Natural killer cell (primary cell): ENCODE measurements at regions of chr5 and their contacts with region 1.

Region 1: GRCh38 chr5:115841382-115842088 is at the starts of genes AP3S1 and ATG12:
- DNase-seq: peak; percentile 93 to 95
- ATAC-seq: peak; percentile 84 to 95 (median 87)
- H3K4me3 ChIP-seq: peak within 1 kb of the TSS; percentile 89
- H3K4me3 Mint-ChIP-seq: peak within 1 kb of the TSS; percentile 96
- H3K27ac ChIP-seq: peak within 1 kb of the TSS; percentile 92
- H3K27ac Mint-ChIP-seq: peak within 1 kb of the TSS; percentile 97 to 98
- H3K4me1 ChIP-seq: peaks cover 15% of the 10 kb centered on the region
- H3K4me1 Mint-ChIP-seq: peaks cover 41 to 56% of the 10 kb centered on the region in 2 donors
- H3K27me3 ChIP-seq: no peaks in the 10 kb centered on the region
- H3K27me3 Mint-ChIP-seq: no peaks in the 10 kb centered on the region
- CTCF ChIP-seq: no peak
- total RNA-seq, gene AP3S1: 35.5 to 57.9 (median 37.1) TPM
- total RNA-seq, gene ATG12: 88.9 to 108 (median 92.9) TPM

Region 2: DNA sequence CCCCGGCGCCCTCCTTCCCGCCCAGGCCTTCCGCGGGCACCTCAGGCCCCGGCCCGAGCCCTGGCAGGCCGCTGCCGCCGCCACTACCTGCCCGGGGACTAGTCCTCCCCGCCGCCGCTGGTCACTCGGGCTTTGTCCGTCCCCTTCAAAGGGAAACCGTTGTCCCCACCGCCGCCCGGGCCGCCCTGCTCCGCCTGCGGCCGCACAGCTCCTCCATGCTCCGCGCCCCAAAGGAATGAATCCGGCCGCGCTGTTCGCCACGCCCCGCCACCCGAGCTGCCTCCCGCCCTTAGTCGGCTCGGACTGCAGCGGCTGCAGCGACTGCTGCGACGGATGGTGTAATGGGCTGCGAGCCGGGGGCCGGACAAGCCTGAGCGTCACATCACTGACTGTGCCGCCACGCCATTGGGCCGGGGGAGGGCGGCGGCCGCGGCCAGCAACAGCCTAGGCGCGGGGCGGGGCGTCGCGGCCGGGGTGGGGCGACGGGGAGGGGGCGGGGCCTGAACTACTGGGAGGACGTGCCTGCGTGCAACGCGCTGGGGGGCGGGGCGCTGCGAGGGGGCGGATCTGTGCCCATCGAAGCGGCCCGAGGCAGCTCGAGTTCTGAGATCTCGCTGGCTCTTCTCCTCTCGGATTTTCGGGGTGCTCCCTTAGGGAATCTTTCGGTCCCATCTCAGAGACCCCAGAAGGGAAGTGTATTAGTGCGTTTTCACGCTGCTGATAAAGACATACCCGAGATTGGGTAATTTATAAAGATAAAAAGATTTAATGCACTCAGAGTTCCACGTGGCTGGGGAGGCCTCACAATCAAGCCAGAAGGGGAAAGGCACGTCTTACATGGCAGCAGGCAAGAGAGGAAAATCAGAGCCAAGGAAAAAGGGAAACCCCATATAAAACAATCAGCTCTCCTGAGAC is 296.8 kb before region 1 on chr5 and contains the start of gene FEM1C:
- intact Hi-C with region 1: loop called (anchors 1 kb)
- DNase-seq: peak; percentile 95
- ATAC-seq: peak; percentile 89 to 96 (median 92)
- H3K4me3 ChIP-seq: peak within 1 kb of the TSS; percentile 58
- H3K4me3 Mint-ChIP-seq: peak within 1 kb of the TSS; percentile 98
- H3K27ac ChIP-seq: peak within 1 kb of the TSS; percentile 98
- H3K27ac Mint-ChIP-seq: peak within 1 kb of the TSS; percentile 93 to 98
- H3K4me1 ChIP-seq: peaks cover 13% of the 10 kb centered on the region
- H3K4me1 Mint-ChIP-seq: peaks cover 48 to 54% of the 10 kb centered on the region in 2 donors
- H3K27me3 ChIP-seq: no peaks in the 10 kb centered on the region
- H3K27me3 Mint-ChIP-seq: no peaks in the 10 kb centered on the region
- CTCF ChIP-seq: no peak
- total RNA-seq, gene FEM1C: 33.8 to 48.6 (median 36.2) TPM

Region 3: DNA sequence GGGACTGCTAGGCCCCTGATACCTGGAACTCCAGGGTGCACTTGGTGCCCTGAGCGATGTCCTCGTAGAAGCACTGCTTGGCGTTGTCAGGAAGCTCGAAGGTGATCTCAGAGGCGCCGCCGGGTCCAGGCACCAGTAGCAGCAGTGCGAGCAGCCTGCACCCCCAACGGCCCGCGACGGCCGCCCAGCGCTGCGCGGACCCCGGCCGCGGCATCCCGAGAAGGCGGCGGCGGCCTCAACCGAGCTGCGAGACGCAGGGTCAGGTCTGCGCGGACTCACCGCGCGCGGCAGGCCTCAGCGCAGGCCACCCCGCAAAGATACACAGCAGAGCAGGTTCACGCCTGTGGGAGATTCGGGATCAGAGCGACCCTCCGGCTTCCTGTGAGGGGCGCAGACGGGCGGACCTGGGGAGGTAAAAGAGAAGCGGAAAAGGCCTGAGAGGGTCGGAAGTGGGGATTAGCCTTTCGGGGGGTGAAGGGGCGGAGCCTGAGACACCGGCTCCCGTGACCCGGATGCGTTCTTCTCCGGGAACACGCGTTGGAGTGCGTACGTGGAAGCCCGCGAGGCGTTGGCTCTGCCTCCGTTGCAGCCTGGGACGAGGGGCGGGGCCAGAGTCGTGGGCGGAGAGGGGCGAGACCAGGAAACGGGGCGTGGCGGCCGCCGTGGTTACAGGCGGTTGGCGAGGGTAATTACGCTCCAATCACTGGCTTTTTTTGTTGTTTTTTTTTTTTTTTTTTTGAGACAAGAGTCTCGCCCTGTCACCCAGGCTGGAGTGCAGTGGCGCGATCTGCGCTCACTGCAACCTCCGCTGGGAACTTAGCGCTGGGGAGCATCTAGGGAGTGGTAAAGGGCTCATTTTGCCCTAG is 215.7 kb before region 1 on chr5 and contains the start of gene TMED7:
- intact Hi-C with region 1: loop called (anchors 2 kb)
- DNase-seq: peak; percentile 96 to 99
- ATAC-seq: peak; percentile 89 to 97 (median 90)
- H3K4me3 ChIP-seq: peak within 1 kb of the TSS; percentile 83
- H3K4me3 Mint-ChIP-seq: no peak within 1 kb of the TSS
- H3K27ac ChIP-seq: peak within 1 kb of the TSS; percentile 94
- H3K27ac Mint-ChIP-seq: no peak within 1 kb of the TSS
- H3K4me1 ChIP-seq: peaks cover 11% of the 10 kb centered on the region
- H3K4me1 Mint-ChIP-seq: peaks cover 24 to 31% of the 10 kb centered on the region in 2 donors
- H3K27me3 ChIP-seq: no peaks in the 10 kb centered on the region
- H3K27me3 Mint-ChIP-seq: peaks cover 0 to 2% of the 10 kb centered on the region in 2 donors
- CTCF ChIP-seq: no peak
- total RNA-seq, gene TMED7: 40.6 to 48.8 (median 48.1) TPM

Region 4: GRCh38 chr5:115634343-115635132 is 207.0 kb before region 1 on chr5:
- intact Hi-C with region 1: loop called (anchors 1 kb)
- DNase-seq: peak; percentile 75 to 89
- ATAC-seq: peak; percentile 95 to 100 (median 98)
- H3K4me3 ChIP-seq: peak overlapping the region; percentile 32
- H3K4me3 Mint-ChIP-seq: peak overlapping the region; percentile 84
- H3K27ac ChIP-seq: peak overlapping the region; percentile 53
- H3K27ac Mint-ChIP-seq: peak overlapping the region; percentile 67 to 81
- H3K4me1 ChIP-seq: no peaks in the 10 kb centered on the region
- H3K4me1 Mint-ChIP-seq: peaks cover 0 to 8% of the 10 kb centered on the region in 2 donors
- H3K27me3 ChIP-seq: no peaks in the 10 kb centered on the region
- H3K27me3 Mint-ChIP-seq: peaks cover 2 to 25% of the 10 kb centered on the region in 2 donors
- CTCF ChIP-seq: peak; percentile 99

Region 5: GRCh38 chr5:116084871-116085715 is 243.6 kb after region 1 on chr5 and contains the start of gene COMMD10:
- intact Hi-C with region 1: loop called (anchors 1 kb)
- DNase-seq: peak; percentile 76 to 94
- ATAC-seq: peak; percentile 92 to 95 (median 94)
- H3K4me3 ChIP-seq: peak within 1 kb of the TSS; percentile 97
- H3K4me3 Mint-ChIP-seq: peak within 1 kb of the TSS; percentile 93
- H3K27ac ChIP-seq: peak within 1 kb of the TSS; percentile 99
- H3K27ac Mint-ChIP-seq: peak within 1 kb of the TSS; percentile 90 to 95
- H3K4me1 ChIP-seq: peaks cover 15% of the 10 kb centered on the region
- H3K4me1 Mint-ChIP-seq: peaks cover 29 to 36% of the 10 kb centered on the region in 2 donors
- H3K27me3 ChIP-seq: no peaks in the 10 kb centered on the region
- H3K27me3 Mint-ChIP-seq: no peaks in the 10 kb centered on the region
- CTCF ChIP-seq: no peak
- total RNA-seq, gene COMMD10: 28.7 to 41.1 (median 35.1) TPM